ENCODE measurements at regions of chr20 and their contacts with region 1.

Region 1: DNA sequence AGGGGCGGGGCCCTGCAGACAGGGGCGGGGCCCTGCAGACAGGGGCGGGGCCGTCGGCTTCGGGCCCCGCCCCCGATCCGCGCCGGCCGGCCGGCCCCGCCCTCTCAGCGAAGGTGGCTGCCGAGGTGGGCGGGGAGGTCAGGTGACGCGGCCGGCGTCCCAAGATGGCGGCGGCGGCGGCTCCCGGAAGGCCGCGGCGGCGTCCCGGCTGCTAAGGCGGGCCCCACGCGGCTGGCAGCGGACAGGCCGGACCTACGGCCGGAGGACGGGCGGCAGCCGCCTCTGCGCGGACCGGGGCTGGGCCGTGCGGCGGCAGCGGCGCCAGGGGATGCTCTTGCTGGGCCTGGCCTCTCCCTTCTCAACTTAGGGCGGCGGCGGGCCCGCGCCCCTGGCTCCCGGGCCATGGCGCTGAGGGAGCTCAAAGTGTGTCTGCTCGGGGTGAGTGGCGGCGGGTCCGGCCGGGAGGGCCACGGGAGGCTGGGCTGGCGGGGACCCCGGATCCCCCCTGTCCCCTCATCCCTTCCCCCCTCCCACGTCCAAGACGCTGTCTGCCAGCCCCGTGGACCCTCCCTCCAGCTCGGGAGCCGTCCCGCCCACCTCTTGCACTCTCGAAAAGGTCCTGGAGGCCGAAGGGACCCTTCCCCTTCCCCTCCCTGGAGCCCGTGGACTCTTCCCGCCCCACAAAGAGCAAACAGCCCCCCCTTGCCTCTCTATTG is at the start of gene RAB22A:
- DNase-seq: peak; percentile 78
- H3K4me3 ChIP-seq: peak within 1 kb of the TSS; percentile 98
- H3K27ac ChIP-seq: peak within 1 kb of the TSS; percentile 73 to 82
- H3K4me1 ChIP-seq: peaks cover 4% of the 10 kb centered on the region
- H3K27me3 ChIP-seq: no peaks in the 10 kb centered on the region
- CTCF ChIP-seq: peak in 1 of 4 experiments; percentile 9
- POLR2A ChIP-seq: peak; percentile 78
- total RNA-seq, gene RAB22A: 16.9 to 20.4 TPM

Region 2: DNA sequence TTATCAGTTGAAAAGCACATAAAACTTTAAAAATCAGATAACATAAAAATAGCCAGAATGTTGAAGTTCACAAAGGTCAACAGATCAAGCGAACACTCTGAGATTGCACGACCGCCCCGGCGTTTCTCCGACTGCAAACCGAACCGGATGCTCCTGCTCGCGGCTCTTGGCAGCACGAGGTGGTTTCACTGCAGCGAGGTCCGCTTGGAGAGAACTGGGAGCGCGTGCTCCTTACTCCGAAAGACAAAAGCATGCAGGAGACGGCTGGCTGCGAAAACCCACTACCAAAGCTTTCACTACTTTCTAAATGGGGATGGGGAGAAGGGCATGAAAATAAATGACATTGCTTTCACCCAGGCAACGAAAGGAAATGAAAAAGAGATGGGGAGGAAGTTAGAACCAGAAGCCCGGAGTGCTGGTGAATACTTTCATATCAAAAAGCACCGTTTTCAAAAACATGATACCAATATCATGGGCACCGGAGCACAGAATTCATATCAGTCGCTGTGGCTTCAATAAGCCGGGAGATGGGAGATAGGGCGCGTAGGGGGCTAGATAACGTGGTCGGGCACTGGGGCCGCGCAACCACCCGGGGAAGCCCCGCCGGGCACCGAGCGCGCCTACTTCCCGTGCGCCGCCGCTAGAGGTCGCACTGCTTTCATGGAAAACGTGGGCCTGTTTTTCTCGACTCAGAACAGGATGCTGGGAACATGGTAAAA is 73.0 kb before region 1 on chr20:
- intact Hi-C with region 1: no loop called
- DNase-seq: peak; percentile 56
- H3K4me3 ChIP-seq: peak overlapping the region; percentile 20 to 31
- H3K27ac ChIP-seq: no peak overlapping the region
- H3K4me1 ChIP-seq: no peaks in the 10 kb centered on the region
- H3K27me3 ChIP-seq: no peaks in the 10 kb centered on the region
- CTCF ChIP-seq: peak; percentile 89 to 94 (median 92)
- POLR2A ChIP-seq: no peak

Region 3: GRCh38 chr20:58388882-58389323 is 79.2 kb after region 1 on chr20 and contains the start of gene VAPB:
- intact Hi-C with region 1: loop called (anchors 5 kb)
- DNase-seq: peak; percentile 92
- H3K4me3 ChIP-seq: peak within 1 kb of the TSS; percentile 78
- H3K27ac ChIP-seq: peak within 1 kb of the TSS; percentile 77 to 81
- H3K4me1 ChIP-seq: peaks cover 9% of the 10 kb centered on the region
- H3K27me3 ChIP-seq: no peaks in the 10 kb centered on the region
- CTCF ChIP-seq: peak in 2 of 4 experiments; percentile 7 to 28
- POLR2A ChIP-seq: peak; percentile 89
- total RNA-seq, gene VAPB: 14.2 to 21.1 TPM

Measured in prostate gland (tissue), 2 donors.